Mucosa of descending colon (tissue), 3 donors: ENCODE measurements at regions of chr3 and their contacts with region 1.

Region 1: DNA sequence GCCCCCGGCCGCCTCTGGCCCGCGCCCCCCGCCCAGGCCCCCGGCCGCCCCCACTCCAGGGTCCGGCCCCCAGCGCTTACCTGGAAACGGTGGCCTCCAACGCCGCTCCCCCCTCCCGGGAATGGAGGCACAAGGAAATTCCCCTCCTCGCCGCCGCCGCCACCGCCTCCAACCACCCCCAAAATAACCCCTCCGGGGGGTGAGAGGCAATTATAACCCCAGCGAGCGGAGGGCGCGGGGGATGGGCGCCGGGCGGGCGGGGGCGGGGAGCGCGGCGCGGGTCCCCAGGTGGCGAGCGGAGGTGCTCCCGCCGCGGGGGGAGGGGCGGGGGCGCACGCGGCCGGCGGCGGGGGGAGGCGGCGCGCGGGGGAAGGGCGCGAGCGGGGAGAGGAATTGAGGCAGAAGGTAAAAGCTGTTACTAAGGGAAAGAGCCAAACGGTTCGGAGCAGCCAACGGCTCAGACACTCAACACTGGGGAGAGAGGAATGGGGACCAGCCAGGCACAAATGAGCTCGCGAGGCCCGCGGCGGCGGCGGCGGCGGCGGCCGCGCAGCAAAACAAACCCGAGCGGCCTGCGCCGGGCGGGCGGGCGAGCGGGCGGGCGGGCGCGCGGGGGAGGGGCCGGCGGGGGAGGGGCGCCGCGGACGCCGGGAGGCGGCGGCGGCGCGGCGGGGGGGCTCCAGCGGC is at the start of gene TBL1XR1:
- DNase-seq: peak; percentile 94 to 95 (median 94)
- ATAC-seq: peak; percentile 81
- H3K4me3 ChIP-seq: peak within 1 kb of the TSS; percentile 63
- H3K4me1 ChIP-seq: peaks cover 20% of the 10 kb centered on the region
- CTCF ChIP-seq: no peak
- total RNA-seq, gene TBL1XR1: 175 to 200 (median 178) TPM

Region 2: GRCh38 chr3:177050501-177051237 is 146.5 kb before region 1 on chr3:
- intact Hi-C with region 1: loop called in 1 of 2 experiments (anchors 10 kb)
- DNase-seq: peak in 1 of 3 donors; percentile 41
- ATAC-seq: peak; percentile 71
- H3K4me3 ChIP-seq: no peak overlapping the region
- H3K4me1 ChIP-seq: no peaks in the 10 kb centered on the region
- CTCF ChIP-seq: no peak

Region 3: DNA sequence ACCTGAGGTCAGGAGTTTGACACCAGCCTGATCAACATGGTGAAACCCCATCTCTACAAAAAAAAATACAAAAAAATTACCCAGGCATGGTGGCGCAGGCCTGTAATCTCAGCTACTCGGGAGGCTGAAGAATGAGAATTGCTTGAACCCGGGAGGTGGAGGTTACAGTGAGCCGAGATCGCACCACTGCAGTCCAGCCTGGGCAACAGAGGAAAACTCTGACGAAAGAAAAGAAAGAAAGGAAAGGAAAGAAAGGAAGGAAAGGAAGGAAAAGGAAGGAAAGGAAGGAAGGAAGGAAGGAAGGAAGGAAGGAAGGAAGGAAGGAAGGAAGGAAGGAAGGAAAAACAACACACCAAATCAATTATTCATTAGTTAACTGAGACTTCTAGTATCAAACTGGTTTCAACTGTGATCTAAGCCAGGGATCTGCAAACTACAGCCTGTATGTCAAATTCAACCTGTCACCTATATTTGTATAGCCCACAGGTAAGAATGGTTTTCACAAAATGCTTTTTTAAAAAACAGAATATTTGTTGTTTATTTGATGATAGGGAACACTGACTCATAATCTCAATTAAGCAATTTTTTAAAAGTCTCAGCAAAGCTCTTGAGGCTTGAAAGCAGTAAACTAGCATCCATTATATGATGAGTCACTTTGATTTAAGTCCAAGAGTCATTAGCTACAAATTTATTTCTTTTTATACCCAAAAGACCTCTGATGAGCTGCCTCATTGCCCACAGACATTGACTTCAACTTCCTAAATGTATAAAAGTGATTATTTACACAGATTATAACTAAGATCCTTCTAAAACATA is 127.5 kb before region 1 on chr3:
- intact Hi-C with region 1: loop called in 1 of 2 experiments (anchors 10 kb)
- DNase-seq: no peak
- ATAC-seq: no peak
- H3K4me3 ChIP-seq: no peak overlapping the region
- H3K4me1 ChIP-seq: peaks cover 13% of the 10 kb centered on the region
- CTCF ChIP-seq: no peak

Region 4: DNA sequence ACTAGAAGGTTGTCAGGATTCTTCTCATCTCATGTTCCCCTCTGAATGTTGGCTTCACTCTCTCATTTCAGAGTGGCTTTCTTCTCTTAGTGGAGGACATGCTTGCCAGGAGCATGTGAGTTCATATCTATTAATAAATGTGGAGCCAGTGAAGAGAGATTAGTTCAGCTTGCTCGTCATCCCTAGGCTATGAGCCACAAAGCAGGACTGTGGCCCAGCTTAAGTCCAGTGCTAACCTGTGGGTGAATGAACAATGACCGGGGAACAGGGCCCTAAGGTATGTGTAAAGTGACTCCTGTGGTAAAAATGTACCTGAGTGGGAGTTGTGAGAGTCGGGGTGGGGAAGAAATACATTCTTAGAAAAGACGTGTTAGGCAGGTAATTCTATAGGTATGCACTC is 97.0 kb after region 1 on chr3:
- intact Hi-C with region 1: no loop called
- DNase-seq: no peak
- ATAC-seq: no peak
- H3K4me3 ChIP-seq: no peak overlapping the region
- H3K4me1 ChIP-seq: peaks cover 35% of the 10 kb centered on the region
- CTCF ChIP-seq: no peak

Region 5: GRCh38 chr3:177359593-177360357 is 162.6 kb after region 1 on chr3:
- intact Hi-C with region 1: loop called (anchors 2 to 5 kb)
- DNase-seq: peak; percentile 97 to 98 (median 98)
- ATAC-seq: peak; percentile 84
- H3K4me3 ChIP-seq: peak overlapping the region; percentile 6
- H3K4me1 ChIP-seq: peaks cover 54% of the 10 kb centered on the region
- CTCF ChIP-seq: no peak

Region 6: DNA sequence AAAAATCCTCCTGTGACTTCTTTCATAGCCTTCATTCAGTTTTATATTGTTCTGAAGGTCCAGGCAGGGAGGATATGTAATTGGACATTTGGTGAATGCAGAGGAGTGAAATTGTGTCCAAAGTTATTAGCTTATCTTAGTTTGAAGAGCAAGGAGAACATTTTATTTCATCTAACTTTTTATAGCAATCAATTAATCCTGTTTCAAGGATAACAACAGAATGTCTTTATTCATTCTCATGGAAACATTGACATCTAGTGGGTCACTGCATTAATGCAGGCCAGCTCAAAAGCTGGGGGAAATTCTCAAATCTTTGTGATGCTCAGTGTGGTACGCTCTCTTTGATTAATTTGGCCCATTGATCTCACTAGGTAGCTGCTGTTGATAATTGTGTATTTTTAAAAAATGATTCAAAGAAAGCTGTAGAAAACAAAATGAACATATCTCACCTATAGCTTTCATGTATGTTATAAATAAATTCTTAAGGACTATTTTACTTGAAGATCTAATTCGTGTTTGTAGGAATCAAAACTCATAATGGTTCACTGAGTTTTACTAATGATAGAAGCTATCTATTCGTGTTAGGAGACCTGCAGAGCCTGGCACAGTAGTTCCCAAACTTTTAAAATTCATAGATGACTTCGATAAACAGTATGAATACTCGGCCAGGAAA is 1188.2 kb after region 1 on chr3:
- intact Hi-C with region 1: loop called in 1 of 2 experiments (anchors 10 kb)
- DNase-seq: peak in 1 of 3 donors; percentile 54
- ATAC-seq: peak; percentile 52
- H3K4me3 ChIP-seq: no peak overlapping the region
- H3K4me1 ChIP-seq: no peaks in the 10 kb centered on the region
- CTCF ChIP-seq: peak; percentile 35